ENCODE measurements at regions of chr14 and their contacts with region 1.

Region 1: GRCh38 chr14:61750708-61751474 is 11.3 kb upstream of the SNAPC1 start:
- DNase-seq: peak; percentile 85
- H3K4me3 Mint-ChIP-seq: peak overlapping the region; percentile 95
- H3K27ac Mint-ChIP-seq: peak overlapping the region; percentile 94
- H3K4me1 Mint-ChIP-seq: peaks cover 57% of the 10 kb centered on the region
- H3K27me3 Mint-ChIP-seq: no peaks in the 10 kb centered on the region

Region 2: DNA sequence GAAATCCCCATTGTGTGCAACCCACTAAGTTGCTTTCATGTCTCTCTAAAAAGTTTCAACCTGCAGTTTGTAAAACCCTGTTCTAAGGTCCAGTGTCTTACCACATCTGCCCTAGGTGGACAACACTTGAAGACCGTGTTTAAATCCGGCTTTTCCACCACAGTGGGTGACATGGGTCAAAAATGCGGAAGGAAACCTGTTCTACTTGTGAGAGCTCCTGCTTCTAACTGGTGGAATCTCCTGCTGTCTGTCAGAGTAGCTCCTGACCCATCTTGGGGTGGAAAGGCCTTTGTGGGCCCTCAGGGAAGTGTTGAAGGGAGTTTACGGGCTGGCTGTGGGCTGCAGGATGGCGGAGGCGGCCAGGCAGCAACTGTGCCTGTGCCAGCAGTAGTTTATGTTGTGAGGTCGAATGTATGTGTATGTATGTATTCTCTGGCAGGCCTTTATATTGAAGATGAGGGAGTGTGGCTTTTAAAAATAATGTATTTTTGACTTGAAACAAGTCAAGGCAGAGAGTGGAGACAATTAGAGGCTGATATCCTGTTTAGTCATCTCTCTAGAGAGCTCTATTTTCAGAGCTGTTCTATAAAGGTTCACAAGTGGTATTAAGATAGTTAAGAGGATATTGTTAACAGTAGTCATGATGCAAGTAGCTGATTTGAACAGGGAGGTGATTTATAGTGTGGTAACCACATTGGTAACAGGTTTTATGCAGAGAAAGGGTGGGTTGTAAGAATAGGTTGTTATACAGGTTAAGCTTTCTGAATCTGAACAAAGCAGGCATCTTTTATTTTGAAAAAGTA is 362.5 kb before region 1 on chr14:
- intact Hi-C with region 1: loop called (anchors 5 kb)
- DNase-seq: no peak
- H3K4me3 Mint-ChIP-seq: no peak overlapping the region
- H3K27ac Mint-ChIP-seq: no peak overlapping the region
- H3K4me1 Mint-ChIP-seq: peaks cover 13% of the 10 kb centered on the region
- H3K27me3 Mint-ChIP-seq: no peaks in the 10 kb centered on the region

Region 3: GRCh38 chr14:61503167-61503801 is 247.6 kb before region 1 on chr14:
- intact Hi-C with region 1: no loop called
- DNase-seq: peak; percentile 51
- H3K4me3 Mint-ChIP-seq: peak overlapping the region; percentile 76
- H3K27ac Mint-ChIP-seq: peak overlapping the region; percentile 99
- H3K4me1 Mint-ChIP-seq: peaks cover 94% of the 10 kb centered on the region
- H3K27me3 Mint-ChIP-seq: no peaks in the 10 kb centered on the region

Region 4: DNA sequence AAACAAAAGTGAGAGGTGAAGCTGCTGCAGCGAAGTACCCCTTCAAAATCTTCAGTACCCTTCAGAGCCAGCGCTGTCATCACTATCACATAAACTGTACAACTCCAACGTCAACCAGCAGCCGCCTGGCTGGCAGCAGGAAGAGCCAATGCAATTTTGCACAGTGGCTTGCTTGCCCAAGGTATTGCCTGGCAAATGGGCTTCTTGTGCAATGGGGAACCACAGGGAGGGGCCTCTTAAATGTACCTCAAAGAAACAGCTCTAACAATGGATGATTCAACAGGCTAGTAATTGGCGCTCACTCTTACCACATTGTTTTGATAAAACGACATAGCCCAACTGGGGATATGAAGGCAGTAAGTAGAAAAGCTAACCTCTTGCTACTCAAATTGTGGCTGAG is 181.1 kb before region 1 on chr14:
- intact Hi-C with region 1: no loop called
- DNase-seq: peak; percentile 40
- H3K4me3 Mint-ChIP-seq: peak overlapping the region; percentile 75
- H3K27ac Mint-ChIP-seq: peak overlapping the region; percentile 66
- H3K4me1 Mint-ChIP-seq: peaks cover 91% of the 10 kb centered on the region
- H3K27me3 Mint-ChIP-seq: no peaks in the 10 kb centered on the region

Region 5: DNA sequence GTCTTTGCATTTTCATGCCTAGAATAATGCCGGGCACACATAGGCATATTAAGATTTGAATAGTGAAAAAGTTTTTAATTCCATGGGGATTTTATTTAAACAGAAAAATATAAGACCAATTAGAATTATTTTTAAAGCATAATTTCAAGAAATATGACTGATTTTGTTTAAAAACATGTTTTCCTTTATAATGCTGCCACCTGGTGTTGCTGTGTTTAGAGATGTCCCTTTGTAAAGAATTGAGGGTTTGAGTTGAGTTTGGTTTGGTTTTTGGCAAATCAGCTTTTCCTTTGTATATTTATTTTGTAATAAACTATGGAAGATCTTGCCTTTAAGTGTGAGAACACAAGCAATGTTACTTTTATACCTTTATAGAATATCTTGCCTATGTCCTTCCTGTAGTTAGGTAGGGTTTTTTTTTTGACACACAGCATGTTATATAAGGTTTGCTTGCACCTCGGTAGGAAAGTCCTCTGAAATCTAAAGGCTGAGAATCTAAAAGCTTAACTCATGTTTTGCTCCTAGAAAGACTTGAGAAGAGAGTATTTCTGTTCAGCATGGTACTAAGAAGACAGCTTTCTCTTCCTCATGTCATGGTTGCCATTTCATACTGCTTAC is 20.0 kb before region 1 on chr14:
- intact Hi-C with region 1: loop called (anchors 1 kb)
- DNase-seq: no peak
- H3K4me3 Mint-ChIP-seq: peak overlapping the region; percentile 8
- H3K27ac Mint-ChIP-seq: peak overlapping the region; percentile 61
- H3K4me1 Mint-ChIP-seq: peaks cover 82% of the 10 kb centered on the region
- H3K27me3 Mint-ChIP-seq: no peaks in the 10 kb centered on the region

Region 6: GRCh38 chr14:61737915-61738314 is 13.0 kb before region 1 on chr14:
- intact Hi-C with region 1: loop called (anchors 1 kb)
- DNase-seq: no peak
- H3K4me3 Mint-ChIP-seq: no peak overlapping the region
- H3K27ac Mint-ChIP-seq: peak overlapping the region; percentile 34
- H3K4me1 Mint-ChIP-seq: peaks cover 50% of the 10 kb centered on the region
- H3K27me3 Mint-ChIP-seq: no peaks in the 10 kb centered on the region

Region 7: GRCh38 chr14:61761959-61762786 is 11.3 kb after region 1 on chr14 and contains the start of gene SNAPC1:
- intact Hi-C with region 1: loop called (anchors 1 kb)
- DNase-seq: peak; percentile 97
- H3K4me3 Mint-ChIP-seq: peak within 1 kb of the TSS; percentile 91
- H3K27ac Mint-ChIP-seq: peak within 1 kb of the TSS; percentile 90
- H3K4me1 Mint-ChIP-seq: peaks cover 59% of the 10 kb centered on the region
- H3K27me3 Mint-ChIP-seq: peaks cover 3% of the 10 kb centered on the region
- total RNA-seq, gene SNAPC1: 10.8 and 11.0 TPM in 2 replicates

Region 8: GRCh38 chr14:61780125-61780524 is 29.2 kb after region 1 on chr14:
- intact Hi-C with region 1: loop called (anchors 1 kb)
- DNase-seq: peak; percentile 26
- H3K4me3 Mint-ChIP-seq: peak overlapping the region; percentile 68
- H3K27ac Mint-ChIP-seq: peak overlapping the region; percentile 89
- H3K4me1 Mint-ChIP-seq: peaks cover 42% of the 10 kb centered on the region
- H3K27me3 Mint-ChIP-seq: no peaks in the 10 kb centered on the region

Region 9: DNA sequence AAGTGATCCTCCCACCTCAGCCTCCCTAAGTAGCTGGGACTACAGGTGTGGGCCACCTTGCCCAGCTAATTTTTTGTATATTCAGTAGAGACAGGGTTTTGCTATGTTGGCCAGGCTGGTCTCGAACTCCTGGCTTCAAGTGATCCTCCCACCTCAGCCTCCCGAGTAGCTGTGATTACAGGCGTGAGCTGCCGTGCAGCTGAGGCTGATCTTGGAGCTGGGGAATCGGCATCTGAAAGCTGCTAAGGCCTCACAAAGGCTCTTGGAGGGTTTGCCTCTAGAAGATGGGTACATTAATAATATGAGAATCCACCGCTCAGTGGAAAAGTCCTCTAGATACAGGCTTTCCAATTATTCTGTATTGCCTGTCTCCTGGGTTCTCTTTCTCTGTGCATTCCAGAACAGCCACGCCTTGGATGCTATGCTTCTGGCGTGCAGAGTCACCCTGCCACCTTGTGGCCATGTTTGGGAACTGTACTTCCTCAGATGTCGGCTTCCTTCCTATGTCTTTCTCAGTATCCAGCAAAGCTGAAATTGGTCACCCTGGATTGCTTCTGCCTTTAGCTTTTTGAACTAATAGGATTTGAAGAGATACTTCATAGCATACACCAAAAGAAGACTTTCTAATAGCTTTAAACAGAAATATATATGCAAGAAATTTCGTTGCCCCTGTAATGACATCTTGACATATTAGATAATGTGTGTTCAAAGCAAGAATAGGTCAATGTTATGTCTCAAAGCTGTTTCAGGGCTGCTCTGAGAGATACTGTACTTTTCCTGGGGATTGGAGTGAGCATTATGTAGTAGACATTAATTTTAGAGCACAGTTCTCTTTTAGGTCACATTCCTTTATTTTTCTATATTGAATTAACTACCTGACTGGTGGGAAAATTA is 86.7 kb after region 1 on chr14:
- intact Hi-C with region 1: loop called (anchors 1 kb)
- DNase-seq: peak; percentile 66
- H3K4me3 Mint-ChIP-seq: no peak overlapping the region
- H3K27ac Mint-ChIP-seq: no peak overlapping the region
- H3K4me1 Mint-ChIP-seq: no peaks in the 10 kb centered on the region
- H3K27me3 Mint-ChIP-seq: peaks cover 9% of the 10 kb centered on the region

Region 10: GRCh38 chr14:62162998-62163589 is 412.2 kb after region 1 on chr14:
- intact Hi-C with region 1: no loop called
- DNase-seq: peak; percentile 3
- H3K4me3 Mint-ChIP-seq: no peak overlapping the region
- H3K27ac Mint-ChIP-seq: no peak overlapping the region
- H3K4me1 Mint-ChIP-seq: no peaks in the 10 kb centered on the region
- H3K27me3 Mint-ChIP-seq: peaks cover 5% of the 10 kb centered on the region